ENCODE measurements at regions of chr16 and their contacts with region 1.

Region 1: GRCh38 chr16:86751076-86752030 is 173.0 kb downstream of the FOXL1 start:
- DNase-seq: no peak

Region 2: GRCh38 chr16:86669937-86670749 is 81.2 kb before region 1 on chr16:
- intact Hi-C with region 1: loop called (anchors 5 kb)
- DNase-seq: no peak